ENCODE measurements at regions of chr2 and their contacts with region 1.

Region 1: DNA sequence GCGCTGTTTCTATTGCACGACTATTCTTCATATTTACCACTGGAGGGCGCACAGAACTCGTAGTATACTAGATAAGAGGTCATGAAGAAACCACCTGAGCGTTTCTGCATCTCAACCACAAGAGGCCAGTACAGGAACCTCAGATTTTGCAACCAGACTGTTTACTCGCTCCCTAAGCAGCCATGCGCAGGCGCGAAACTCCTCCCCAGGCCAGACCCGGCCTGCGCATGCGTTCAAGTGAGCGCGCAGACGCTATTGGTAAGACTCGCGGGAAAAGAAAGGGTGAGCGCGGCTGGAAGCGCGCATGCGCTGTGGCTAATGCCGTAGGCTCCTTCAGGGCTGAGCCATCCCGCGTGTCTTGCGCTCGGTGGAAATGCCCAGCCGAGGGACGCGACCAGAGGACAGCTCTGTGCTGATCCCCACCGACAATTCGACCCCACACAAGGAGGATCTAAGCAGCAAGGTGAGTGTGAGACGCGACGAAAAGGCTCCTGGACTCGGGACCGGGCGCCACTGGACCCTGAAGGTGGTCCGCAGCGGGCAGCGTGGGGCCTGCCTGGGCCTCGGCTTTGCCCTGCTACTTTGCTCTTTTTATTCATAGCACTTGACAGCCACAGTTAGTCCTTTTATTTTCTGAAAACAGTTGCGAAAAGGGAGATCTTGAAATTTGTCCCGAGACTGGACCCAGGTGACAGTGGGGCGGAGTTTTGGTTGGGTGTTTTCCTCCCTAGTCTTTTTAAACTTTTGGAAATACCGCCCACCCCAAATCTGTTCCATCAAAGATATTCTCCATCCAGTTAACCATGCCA is at the start of gene ASNSD1:
- DNase-seq: peak; percentile 99
- H3K4me3 Mint-ChIP-seq: no peak within 1 kb of the TSS
- H3K27ac Mint-ChIP-seq: no peak within 1 kb of the TSS
- H3K4me1 Mint-ChIP-seq: peaks cover 52% of the 10 kb centered on the region
- H3K27me3 Mint-ChIP-seq: no peaks in the 10 kb centered on the region
- total RNA-seq, gene ASNSD1: 37.9 to 38.4 TPM

Region 2: DNA sequence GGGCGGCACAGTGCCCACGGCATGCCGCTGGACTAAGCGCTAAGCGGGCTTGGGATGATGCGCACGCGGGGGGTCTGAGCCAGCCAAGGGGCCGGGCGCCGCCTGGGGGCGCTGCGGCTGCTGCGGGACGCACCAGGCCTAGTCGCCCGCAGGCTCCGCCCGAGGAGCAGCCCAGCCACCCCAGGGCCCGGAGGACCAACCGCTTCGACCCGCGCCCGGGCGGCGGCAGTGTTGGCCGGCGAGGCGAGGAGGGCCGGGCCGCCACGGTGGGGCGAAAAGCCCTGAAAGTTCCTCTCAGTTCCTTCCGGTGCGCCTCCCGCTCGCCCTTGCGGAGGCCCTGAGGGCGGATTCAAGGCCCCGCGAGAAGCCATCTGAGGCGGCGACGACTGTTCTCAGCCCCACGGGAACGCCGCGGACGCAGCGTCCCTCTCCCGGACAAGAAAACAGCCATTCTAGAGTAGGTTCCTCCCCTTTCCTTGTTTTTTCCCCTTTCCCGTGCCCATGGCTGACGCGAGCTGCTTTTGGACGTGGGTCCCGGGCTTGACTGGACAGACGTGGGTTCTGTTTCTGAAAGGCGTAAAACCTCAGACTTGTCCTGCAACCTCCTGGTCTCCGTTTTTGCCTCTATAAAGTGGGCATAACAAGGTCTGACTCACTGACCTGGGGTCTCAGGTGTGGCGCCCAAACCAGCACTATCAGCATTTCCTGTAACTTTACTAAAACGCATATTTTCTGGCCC is 13.2 kb after region 1 on chr2 and contains the start of gene ANKAR:
- CTCF ChIA-PET with region 1: interaction called, 102 read pairs
- POLR2A ChIA-PET with region 1: interaction called, 33 read pairs
- DNase-seq: peak; percentile 78
- H3K4me3 Mint-ChIP-seq: peak within 1 kb of the TSS; percentile 90
- H3K27ac Mint-ChIP-seq: peak within 1 kb of the TSS; percentile 90
- H3K4me1 Mint-ChIP-seq: peaks cover 33% of the 10 kb centered on the region
- H3K27me3 Mint-ChIP-seq: no peaks in the 10 kb centered on the region
- total RNA-seq, gene ANKAR: 3.9 to 7.0 TPM

Region 3: DNA sequence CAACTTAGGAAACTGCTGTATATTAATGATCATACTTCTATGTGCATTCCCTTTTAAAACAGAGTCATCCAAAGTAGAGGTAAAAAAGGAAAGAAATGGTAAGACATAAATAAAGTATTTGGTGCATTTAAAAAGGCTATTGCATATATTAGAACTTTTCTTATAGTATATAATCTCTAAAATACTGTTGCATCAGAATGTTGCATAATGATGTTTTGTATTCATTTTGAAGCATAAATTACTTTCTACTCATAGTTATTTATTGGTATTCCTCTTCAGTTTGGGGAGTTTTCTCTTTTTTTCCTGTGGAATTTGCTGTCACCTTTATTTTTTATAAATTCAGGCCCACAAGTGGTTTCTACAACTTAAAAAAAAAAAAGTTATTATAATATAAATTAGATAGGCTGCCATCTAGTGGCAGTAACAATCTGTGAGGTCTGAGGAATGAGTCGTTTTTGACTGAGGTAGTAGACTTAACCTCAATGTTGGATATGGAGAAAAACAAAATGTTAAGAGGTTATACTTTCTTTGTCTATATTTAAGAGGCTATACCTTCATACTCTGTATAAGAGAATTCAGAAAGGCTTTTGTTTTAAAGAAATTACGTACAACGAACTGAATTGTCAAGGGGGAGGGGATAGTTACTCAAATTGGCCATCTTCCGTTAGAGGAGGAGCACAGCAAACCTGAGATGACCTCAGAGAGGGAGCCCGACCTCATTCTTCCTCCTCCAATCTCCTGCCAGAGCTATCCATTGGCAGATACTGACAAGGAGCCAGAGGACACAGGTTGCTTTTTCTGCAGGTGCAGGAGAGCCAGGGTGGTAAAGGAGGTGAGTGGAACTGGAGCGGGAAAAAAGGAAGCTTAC is 36.9 kb after region 1 on chr2:
- CTCF ChIA-PET with region 1: interaction called, 40 read pairs
- POLR2A ChIA-PET with region 1: interaction called, 3 read pairs
- DNase-seq: peak; percentile 31
- H3K4me3 Mint-ChIP-seq: no peak overlapping the region
- H3K27ac Mint-ChIP-seq: no peak overlapping the region
- H3K4me1 Mint-ChIP-seq: peaks cover 4% of the 10 kb centered on the region
- H3K27me3 Mint-ChIP-seq: no peaks in the 10 kb centered on the region

Region 4: GRCh38 chr2:189783927-189784867 is 122.8 kb after region 1 on chr2 and contains the starts of genes ORMDL1 and PMS1:
- CTCF ChIA-PET with region 1: interaction called, 3 read pairs
- POLR2A ChIA-PET with region 1: interaction called, 19 read pairs
- DNase-seq: peak; percentile 95
- H3K4me3 Mint-ChIP-seq: peak within 1 kb of the TSS; percentile 93
- H3K27ac Mint-ChIP-seq: peak within 1 kb of the TSS; percentile 93
- H3K4me1 Mint-ChIP-seq: peaks cover 59% of the 10 kb centered on the region
- H3K27me3 Mint-ChIP-seq: no peaks in the 10 kb centered on the region
- total RNA-seq, gene ORMDL1: 87.4 to 89.4 TPM
- total RNA-seq, gene PMS1: 24.6 to 26.4 TPM

Region 5: DNA sequence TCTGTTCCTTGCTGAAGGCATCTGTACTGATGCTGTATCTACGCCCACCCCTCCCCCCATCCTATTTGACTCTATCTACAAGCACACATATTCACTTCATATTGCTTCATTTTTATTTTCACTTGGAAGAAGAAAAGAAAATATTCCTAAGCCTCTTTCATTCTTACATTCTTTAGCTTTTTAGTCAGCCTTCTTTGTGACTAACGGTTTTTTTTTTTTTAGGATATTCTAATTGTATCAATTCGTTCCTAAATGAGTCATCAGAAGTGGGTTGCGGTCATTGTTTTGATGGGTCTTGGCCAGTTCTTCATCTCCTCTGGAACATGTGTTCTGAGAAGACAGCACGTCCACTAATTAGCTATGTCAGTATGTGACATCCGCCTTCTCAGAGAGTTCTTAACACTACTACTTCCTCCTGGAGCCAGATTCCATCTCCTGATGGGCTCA is 1672.6 kb after region 1 on chr2:
- CTCF ChIA-PET with region 1: no interaction called
- POLR2A ChIA-PET with region 1: no interaction called
- DNase-seq: no peak
- H3K4me3 Mint-ChIP-seq: no peak overlapping the region
- H3K27ac Mint-ChIP-seq: no peak overlapping the region
- H3K4me1 Mint-ChIP-seq: peaks cover 1% of the 10 kb centered on the region
- H3K27me3 Mint-ChIP-seq: peaks cover 2% of the 10 kb centered on the region

Measured in activated CD4-positive, alpha-beta memory T cell treated with anti-CD3 and anti-CD28 coated beads, Interleukin-2, amount 10 ng/mL, durations not matched to agents 7 days and 5 days (primary cell).